CD8-positive, alpha-beta T cell (primary cell): ENCODE measurements at regions of chr11 and their contacts with region 1.

Region 1: GRCh38 chr11:67468835-67469811 is at the start of gene TMEM134:
- DNase-seq: peak; percentile 86 to 97 (median 91)
- ATAC-seq: peak; percentile 81
- H3K4me3 ChIP-seq: peak within 1 kb of the TSS; percentile 80 to 89
- H3K4me3 Mint-ChIP-seq: peak within 1 kb of the TSS; percentile 89
- H3K27ac ChIP-seq: peak within 1 kb of the TSS; percentile 78 to 82
- H3K27ac Mint-ChIP-seq: peak within 1 kb of the TSS; percentile 93
- H3K4me1 ChIP-seq: peaks cover 39% of the 10 kb centered on the region
- H3K4me1 Mint-ChIP-seq: peaks cover 37% of the 10 kb centered on the region
- H3K27me3 ChIP-seq: no peaks in the 10 kb centered on the region
- H3K27me3 Mint-ChIP-seq: no peaks in the 10 kb centered on the region
- CTCF ChIP-seq: peak; percentile 43
- total RNA-seq, gene TMEM134: 41.2 to 48.5 TPM

Region 2: DNA sequence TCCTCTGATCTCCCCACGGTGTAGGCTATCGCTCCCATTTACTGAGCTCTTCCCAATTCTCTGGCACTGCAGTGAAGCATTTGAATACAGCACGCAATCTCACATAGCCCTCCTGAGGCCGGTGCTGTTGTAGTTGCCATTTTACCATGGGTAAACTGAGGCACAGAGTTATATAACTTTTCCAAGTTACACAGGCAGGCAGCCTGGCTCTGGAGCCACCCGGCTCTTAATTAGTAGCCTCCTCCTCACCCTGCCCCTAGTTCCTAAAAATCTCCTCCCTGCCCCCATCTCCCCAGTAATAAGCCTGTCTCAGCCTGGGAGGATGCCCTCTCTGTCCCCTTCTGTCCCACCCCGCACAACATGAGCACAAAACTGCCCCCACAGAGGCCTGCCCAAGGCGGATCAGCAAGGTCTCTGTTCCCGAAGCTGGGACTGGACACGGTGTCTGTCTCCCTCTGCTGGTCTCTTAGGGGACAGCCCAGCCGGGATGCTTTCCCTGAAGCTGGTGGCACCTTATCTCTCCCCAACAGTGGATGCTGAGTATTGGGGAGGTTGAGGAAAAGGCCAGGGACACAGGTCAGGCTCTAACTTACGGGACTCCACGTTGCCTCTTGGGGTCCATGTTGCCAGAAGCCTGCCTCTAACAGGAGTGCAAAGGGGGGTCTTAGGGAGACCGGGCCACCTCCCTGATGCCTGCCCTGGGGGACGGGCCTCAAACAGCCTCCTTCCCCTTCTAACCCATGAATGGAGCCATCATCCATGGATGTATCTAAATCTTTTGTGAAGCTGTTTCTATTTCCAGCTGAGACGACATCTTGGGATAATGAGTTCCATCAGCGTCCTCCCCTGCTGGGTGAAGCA is 86.6 kb before region 1 on chr11:
- CTCF ChIA-PET with region 1: interaction called, 11 read pairs
- POLR2A ChIA-PET with region 1: no interaction called
- intact Hi-C with region 1: no loop called
- DNase-seq: peak; percentile 72 to 90 (median 86)
- ATAC-seq: peak; percentile 98
- H3K4me3 ChIP-seq: no peak overlapping the region
- H3K4me3 Mint-ChIP-seq: no peak overlapping the region
- H3K27ac ChIP-seq: no peak overlapping the region
- H3K27ac Mint-ChIP-seq: no peak overlapping the region
- H3K4me1 ChIP-seq: peaks cover 5% of the 10 kb centered on the region
- H3K4me1 Mint-ChIP-seq: peaks cover 5% of the 10 kb centered on the region
- H3K27me3 ChIP-seq: no peaks in the 10 kb centered on the region
- H3K27me3 Mint-ChIP-seq: no peaks in the 10 kb centered on the region
- CTCF ChIP-seq: peak; percentile 90

Region 3: GRCh38 chr11:67409261-67409666 is 59.9 kb before region 1 on chr11:
- CTCF ChIA-PET with region 1: interaction called, 5 read pairs
- POLR2A ChIA-PET with region 1: interaction called, 30 read pairs
- intact Hi-C with region 1: no loop called
- DNase-seq: peak; percentile 54 to 91 (median 82)
- ATAC-seq: peak; percentile 64
- H3K4me3 ChIP-seq: peak overlapping the region; percentile 66 to 99
- H3K4me3 Mint-ChIP-seq: peak overlapping the region; percentile 95
- H3K27ac ChIP-seq: peak overlapping the region; percentile 69 to 71
- H3K27ac Mint-ChIP-seq: peak overlapping the region; percentile 91
- H3K4me1 ChIP-seq: peaks cover 91% of the 10 kb centered on the region
- H3K4me1 Mint-ChIP-seq: peaks cover 87% of the 10 kb centered on the region
- H3K27me3 ChIP-seq: no peaks in the 10 kb centered on the region
- H3K27me3 Mint-ChIP-seq: no peaks in the 10 kb centered on the region
- CTCF ChIP-seq: no peak

Region 4: DNA sequence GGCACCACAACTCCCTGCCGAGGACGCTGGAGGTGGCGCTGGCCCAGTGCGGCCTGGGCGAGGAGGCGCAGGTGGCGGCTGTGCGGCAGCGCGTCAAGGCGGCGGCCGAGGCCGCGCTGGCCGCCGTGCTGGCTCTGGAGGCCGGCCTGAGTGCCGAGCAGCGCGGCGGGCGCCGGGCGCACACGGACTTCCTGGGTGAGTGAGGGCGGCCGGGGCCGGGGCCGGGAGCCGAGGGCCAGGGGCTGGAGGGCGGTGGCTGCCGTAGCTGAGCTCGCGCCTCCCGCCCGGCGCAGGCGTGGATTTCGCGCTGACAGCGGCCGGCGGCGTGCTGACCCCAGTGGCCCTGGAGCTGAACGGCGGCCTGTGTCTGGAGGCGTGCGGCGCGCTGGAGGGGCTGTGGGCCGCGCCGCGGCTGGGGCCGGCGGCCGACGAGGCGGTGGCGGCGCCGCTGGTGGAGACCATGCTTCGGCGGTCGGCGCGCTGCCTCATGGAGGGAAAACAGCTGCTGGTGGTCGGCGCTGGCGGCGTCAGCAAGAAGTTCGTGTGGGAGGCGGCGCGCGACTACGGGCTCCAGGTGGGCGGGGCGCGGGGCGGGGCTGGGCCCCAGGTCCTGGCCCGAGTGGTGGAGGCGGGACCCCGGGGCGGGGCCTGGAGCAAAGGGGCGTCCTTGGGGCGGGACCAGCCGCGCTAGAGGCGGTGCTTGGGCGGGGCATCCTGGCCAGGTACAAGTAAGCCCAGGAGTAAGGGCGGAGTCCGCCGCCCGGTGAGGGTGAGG is 48.3 kb before region 1 on chr11:
- CTCF ChIA-PET with region 1: interaction called, 13 read pairs
- POLR2A ChIA-PET with region 1: interaction called, 45 read pairs
- intact Hi-C with region 1: loop called (anchors 1 kb)
- DNase-seq: peak; percentile 97 to 100 (median 99)
- ATAC-seq: peak; percentile 85
- H3K4me3 ChIP-seq: peak overlapping the region; percentile 49 to 50
- H3K4me3 Mint-ChIP-seq: peak overlapping the region; percentile 86
- H3K27ac ChIP-seq: peak overlapping the region; percentile 55 to 68
- H3K27ac Mint-ChIP-seq: peak overlapping the region; percentile 91
- H3K4me1 ChIP-seq: peaks cover 50% of the 10 kb centered on the region
- H3K4me1 Mint-ChIP-seq: peaks cover 47% of the 10 kb centered on the region
- H3K27me3 ChIP-seq: no peaks in the 10 kb centered on the region
- H3K27me3 Mint-ChIP-seq: no peaks in the 10 kb centered on the region
- CTCF ChIP-seq: no peak

Region 5: GRCh38 chr11:67428052-67428914 is 40.8 kb before region 1 on chr11 and contains the start of gene RPS6KB2:
- CTCF ChIA-PET with region 1: interaction called, 5 read pairs
- POLR2A ChIA-PET with region 1: interaction called, 130 read pairs
- intact Hi-C with region 1: loop called (anchors 1 kb)
- DNase-seq: peak; percentile 97 to 100 (median 98)
- ATAC-seq: peak; percentile 89
- H3K4me3 ChIP-seq: peak within 1 kb of the TSS; percentile 67 to 73
- H3K4me3 Mint-ChIP-seq: peak within 1 kb of the TSS; percentile 99
- H3K27ac ChIP-seq: peak within 1 kb of the TSS; percentile 86 to 87
- H3K27ac Mint-ChIP-seq: peak within 1 kb of the TSS; percentile 95
- H3K4me1 ChIP-seq: peaks cover 34% of the 10 kb centered on the region
- H3K4me1 Mint-ChIP-seq: peaks cover 41% of the 10 kb centered on the region
- H3K27me3 ChIP-seq: no peaks in the 10 kb centered on the region
- H3K27me3 Mint-ChIP-seq: no peaks in the 10 kb centered on the region
- CTCF ChIP-seq: no peak
- total RNA-seq, gene RPS6KB2: 71.8 to 76.2 TPM